ENCODE measurements at regions of chr3 and their contacts with region 1.

Region 1: DNA sequence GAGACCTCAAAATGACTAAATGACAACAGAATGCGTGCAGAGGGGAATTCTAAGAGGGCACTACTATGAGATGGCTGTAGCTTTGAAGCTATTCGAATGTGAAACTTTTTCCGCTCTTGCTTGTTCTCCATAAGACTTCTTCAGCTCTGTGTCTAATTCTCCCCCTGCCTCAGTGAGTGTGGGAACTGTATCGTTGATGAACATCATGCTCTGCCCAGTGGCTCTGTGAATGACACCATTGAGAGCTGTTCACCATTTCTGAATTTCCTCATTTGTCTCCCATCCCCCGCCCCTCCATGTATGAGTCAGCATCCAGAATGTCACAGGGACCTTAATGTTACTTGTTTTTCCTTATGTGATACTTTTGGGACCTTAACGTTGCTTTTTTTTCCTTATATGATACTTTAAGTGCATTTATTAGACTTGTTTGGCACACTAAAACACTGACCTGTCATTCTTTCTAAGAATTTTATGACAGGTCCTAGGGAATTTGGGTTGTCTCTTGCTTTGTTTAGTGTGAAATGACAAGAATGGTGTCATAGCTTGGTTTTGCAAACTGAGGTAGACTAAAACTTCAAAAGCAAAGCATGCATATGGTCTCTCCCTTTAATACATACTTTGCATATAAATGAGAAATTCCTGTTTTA is 99.5 kb downstream of the FNDC3B start:
- DNase-seq: no peak
- H3K4me3 Mint-ChIP-seq: peak overlapping the region; percentile 53
- H3K27ac Mint-ChIP-seq: peak overlapping the region; percentile 84
- H3K4me1 Mint-ChIP-seq: peaks cover 75% of the 10 kb centered on the region
- H3K27me3 Mint-ChIP-seq: no peaks in the 10 kb centered on the region

Region 2: GRCh38 chr3:171846597-171846996 is 292.3 kb before region 1 on chr3:
- intact Hi-C with region 1: loop called (anchors 2 kb)
- DNase-seq: peak; percentile 7
- H3K4me3 Mint-ChIP-seq: no peak overlapping the region
- H3K27ac Mint-ChIP-seq: no peak overlapping the region
- H3K4me1 Mint-ChIP-seq: peaks cover 20% of the 10 kb centered on the region
- H3K27me3 Mint-ChIP-seq: peaks cover 11% of the 10 kb centered on the region

Region 3: DNA sequence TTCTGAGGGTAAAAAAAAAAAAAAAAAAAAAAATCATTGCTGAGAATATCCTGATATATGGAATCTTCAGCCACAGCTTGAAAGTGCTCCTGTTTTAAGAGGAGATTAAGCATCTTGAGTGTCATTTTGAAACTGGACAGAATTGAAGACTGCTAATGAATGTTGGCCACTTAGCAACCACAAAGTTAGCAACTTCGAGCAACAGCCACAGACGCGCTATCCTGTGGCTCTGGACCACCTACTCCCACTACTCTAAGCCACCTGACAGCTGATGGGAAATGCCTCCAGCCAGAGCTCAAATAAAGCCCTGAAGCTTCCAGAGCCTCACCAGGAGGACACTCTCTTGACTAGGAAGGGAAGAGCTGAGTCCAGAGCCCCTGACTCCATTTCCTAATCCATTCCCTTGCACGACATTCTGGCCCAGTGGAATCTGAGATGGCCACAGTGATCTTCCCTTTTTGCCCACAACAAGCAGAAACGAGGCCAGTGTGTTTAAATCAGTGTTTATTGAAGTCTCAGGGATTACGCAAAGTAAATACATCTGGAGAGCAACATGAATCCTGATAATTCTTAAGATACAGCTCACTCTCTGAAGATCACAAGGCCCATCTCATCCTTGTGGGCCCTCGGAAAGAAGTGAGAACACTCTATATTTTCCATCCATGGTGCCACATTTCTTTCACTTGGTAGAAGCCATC is 237.2 kb before region 1 on chr3:
- intact Hi-C with region 1: no loop called
- DNase-seq: no peak
- H3K4me3 Mint-ChIP-seq: no peak overlapping the region
- H3K27ac Mint-ChIP-seq: no peak overlapping the region
- H3K4me1 Mint-ChIP-seq: no peaks in the 10 kb centered on the region
- H3K27me3 Mint-ChIP-seq: peaks cover 2% of the 10 kb centered on the region

Region 4: DNA sequence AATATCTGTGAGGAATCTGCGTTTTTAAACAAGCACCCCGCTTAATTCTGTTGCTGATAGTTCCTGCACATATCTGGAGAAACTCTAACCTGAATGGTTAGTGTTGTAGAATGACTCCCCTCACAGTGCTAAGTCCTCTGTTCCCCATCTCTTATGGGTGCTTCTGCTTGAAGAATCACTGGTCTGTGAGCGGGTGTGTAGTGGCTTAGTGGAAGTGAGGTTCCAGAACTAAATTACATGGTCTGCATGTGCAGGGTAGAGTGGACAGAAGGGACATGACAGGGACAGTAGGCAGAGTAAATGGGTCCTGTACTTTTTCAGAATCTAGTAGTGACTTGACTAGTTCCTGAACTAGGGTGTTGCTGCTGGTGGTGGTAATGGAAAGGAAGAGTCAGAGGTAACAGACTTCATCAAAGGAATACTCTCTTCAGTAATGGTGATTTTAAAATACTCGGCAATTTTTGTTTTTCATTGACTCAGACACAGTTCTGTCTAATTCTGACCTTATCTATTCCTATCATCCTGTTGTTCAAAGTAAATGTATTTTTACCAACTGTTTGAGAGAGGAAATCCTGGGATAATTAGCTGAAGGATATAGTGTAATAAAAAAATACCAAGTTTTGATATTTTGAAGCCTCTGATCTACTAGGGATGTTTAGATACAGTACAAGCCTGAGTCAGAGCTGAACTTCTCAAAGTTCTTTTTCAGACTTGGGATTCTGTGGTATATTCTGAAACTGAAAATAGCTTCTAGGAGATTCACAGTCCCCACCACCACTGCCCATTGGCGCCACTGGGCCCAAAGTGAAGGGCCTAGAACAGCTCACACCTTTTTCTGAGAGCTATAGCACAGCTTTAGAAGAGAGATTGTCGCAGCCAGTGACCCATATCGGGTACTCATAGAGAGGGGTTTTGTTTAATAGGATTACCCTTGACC is 44.0 kb before region 1 on chr3:
- intact Hi-C with region 1: loop called (anchors 2 kb)
- DNase-seq: peak; percentile 25
- H3K4me3 Mint-ChIP-seq: no peak overlapping the region
- H3K27ac Mint-ChIP-seq: peak overlapping the region; percentile 63
- H3K4me1 Mint-ChIP-seq: peaks cover 69% of the 10 kb centered on the region
- H3K27me3 Mint-ChIP-seq: peaks cover 2% of the 10 kb centered on the region

Region 5: DNA sequence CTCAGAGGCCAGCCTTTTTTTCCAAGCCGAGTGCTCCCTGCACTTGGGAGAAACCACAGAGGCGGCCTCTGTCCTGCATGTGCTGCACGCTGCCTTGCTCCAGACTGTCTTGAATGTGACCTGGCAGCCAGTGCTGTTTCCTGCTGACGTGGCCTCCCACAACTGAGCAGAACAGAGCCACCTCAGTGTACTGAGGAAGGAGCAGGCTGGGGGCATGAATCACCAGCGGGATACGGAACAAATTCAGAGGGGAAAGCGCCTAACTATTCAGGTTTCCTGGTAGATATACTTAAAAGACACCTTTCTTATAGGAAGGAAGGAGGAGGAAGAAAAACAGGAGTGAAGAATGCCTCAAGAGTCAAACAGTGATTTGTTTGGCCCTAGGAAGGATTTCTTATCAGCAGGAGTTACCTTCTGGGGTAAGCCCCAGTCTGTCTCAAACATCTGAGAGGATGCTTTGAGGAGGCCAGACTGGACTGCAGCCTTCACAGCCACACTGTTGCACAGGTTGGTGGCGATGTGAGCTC is 14.5 kb after region 1 on chr3:
- intact Hi-C with region 1: loop called (anchors 2 kb)
- DNase-seq: peak; percentile 29
- H3K4me3 Mint-ChIP-seq: no peak overlapping the region
- H3K27ac Mint-ChIP-seq: peak overlapping the region; percentile 65
- H3K4me1 Mint-ChIP-seq: peaks cover 32% of the 10 kb centered on the region
- H3K27me3 Mint-ChIP-seq: no peaks in the 10 kb centered on the region